GM10248 (cell line): ENCODE measurements at regions of chr19 and their contacts with region 1.

Region 1: DNA sequence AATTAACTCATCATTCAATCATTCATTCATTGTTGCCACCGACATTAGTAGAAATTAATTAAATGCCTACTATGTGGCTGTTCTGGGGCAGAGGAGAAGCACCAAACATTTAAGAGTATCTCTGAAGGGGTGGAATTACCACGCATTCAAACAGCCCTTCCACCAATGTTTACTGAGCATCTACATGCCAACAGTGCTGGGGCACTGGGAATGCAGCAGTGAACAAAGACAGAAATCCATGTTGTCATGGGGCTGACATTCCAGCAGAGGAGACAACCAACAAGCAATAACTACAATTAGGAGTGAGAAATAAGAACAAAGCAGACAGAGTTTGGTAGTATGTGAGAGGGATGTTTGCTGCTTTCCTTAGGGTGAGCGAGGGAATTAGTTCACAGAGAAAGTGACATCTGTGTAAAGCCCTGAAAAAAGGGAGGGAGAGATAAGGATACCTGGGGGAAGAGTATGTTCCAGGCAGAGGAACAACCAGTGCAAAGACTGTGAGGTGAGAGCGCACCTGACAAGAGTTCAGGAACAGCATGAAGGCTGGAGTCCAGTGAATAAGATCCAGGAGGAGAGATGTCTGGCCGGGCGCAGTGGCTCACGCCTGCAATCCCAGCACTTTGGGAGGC is 1.3 kb upstream of the PAK4 start:
- DNase-seq: no peak
- CTCF ChIP-seq: no peak

Region 2: DNA sequence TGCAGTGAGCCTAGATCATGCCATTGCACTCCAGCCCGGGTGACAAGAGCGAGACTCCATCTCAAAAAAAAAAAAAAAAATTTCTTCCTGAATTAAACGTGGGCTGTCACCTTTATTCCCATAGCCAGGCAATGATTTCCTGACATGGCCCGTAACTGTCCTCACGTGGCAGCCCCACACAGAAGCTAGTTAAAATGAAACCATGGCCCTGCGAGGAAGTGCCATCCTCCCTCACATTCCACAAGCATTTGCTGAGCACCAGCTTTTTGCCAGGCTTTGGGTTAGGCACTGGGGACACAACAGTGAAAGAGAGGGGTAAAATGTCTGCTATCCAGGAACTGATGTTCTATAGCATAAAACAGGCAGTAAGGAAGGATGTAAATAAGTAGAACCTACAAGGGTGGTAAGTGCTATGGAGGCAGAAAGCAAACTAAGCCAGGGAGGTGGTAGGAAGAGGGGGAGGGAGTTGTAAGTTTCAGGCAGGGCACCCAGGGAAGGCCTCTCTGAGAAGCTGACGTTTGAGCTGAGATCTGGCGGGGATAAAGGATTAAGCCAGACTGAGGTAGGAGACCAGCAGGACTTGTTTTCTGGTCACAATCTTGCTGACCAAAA is 78.6 kb before region 1 on chr19:
- CTCF ChIA-PET with region 1: no interaction called
- POLR2A ChIA-PET with region 1: no interaction called
- DNase-seq: no peak
- CTCF ChIP-seq: no peak

Region 3: GRCh38 chr19:39110263-39110967 is 13.8 kb before region 1 on chr19:
- CTCF ChIA-PET with region 1: interaction called, 16 read pairs
- POLR2A ChIA-PET with region 1: no interaction called
- DNase-seq: peak; percentile 85
- CTCF ChIP-seq: peak; percentile 88

Region 4: GRCh38 chr19:39328046-39328705 is 203.9 kb after region 1 on chr19:
- CTCF ChIA-PET with region 1: interaction called, 35 read pairs
- POLR2A ChIA-PET with region 1: no interaction called
- DNase-seq: peak; percentile 81
- CTCF ChIP-seq: peak; percentile 96

Region 5: GRCh38 chr19:39335168-39335548 is 210.9 kb after region 1 on chr19:
- CTCF ChIA-PET with region 1: interaction called, 12 read pairs
- POLR2A ChIA-PET with region 1: no interaction called
- DNase-seq: no peak
- CTCF ChIP-seq: no peak